HCT116 (cell line): ENCODE measurements at regions of chr17 and their contacts with region 1.

Region 1: GRCh38 chr17:66200685-66201092 is 8.8 kb upstream of the CEP112 start:
- DNase-seq: peak; percentile 89
- ATAC-seq: peak; percentile 80
- H3K4me3 ChIP-seq: no peak overlapping the region
- H3K27ac ChIP-seq: no peak overlapping the region
- H3K4me1 ChIP-seq: peaks cover 0 to 7% of the 10 kb centered on the region in 2 experiments; a peak in 1 of 4 replicates
- H3K27me3 ChIP-seq: no peaks in the 10 kb centered on the region
- CTCF ChIP-seq: peak; percentile 88 to 95 (median 88)
- POLR2A ChIP-seq: no peak
- RAD21 ChIP-seq: peak; percentile 97

Region 2: GRCh38 chr17:66255112-66255511 is 54.4 kb after region 1 on chr17:
- CTCF ChIA-PET with region 1: interaction called, 10 read pairs
- POLR2A ChIA-PET with region 1: no interaction called
- RAD21 ChIA-PET with region 1: no interaction called
- intact Hi-C with region 1: no loop called
- DNase-seq: peak; percentile 79
- ATAC-seq: peak; percentile 95
- H3K4me3 ChIP-seq: no peak overlapping the region
- H3K27ac ChIP-seq: no peak overlapping the region
- H3K4me1 ChIP-seq: peaks cover 0 to 4% of the 10 kb centered on the region in 2 experiments; a peak in 1 of 4 replicates
- H3K27me3 ChIP-seq: no peaks in the 10 kb centered on the region; the same call in 1 of the 2 replicates
- CTCF ChIP-seq: peak; percentile 75 to 97 (median 91)
- POLR2A ChIP-seq: no peak
- RAD21 ChIP-seq: peak; percentile 99

Region 3: GRCh38 chr17:66426397-66427033 is 225.8 kb after region 1 on chr17:
- CTCF ChIA-PET with region 1: no interaction called
- POLR2A ChIA-PET with region 1: no interaction called
- RAD21 ChIA-PET with region 1: no interaction called
- intact Hi-C with region 1: loop called (anchors 2 kb)
- DNase-seq: peak; percentile 31
- ATAC-seq: peak; percentile 98
- H3K4me3 ChIP-seq: no peak overlapping the region
- H3K27ac ChIP-seq: no peak overlapping the region
- H3K4me1 ChIP-seq: peaks cover 0 to 7% of the 10 kb centered on the region in 2 experiments; a peak in 1 of 4 replicates
- H3K27me3 ChIP-seq: no peaks in the 10 kb centered on the region
- CTCF ChIP-seq: peak; percentile 54 to 65 (median 63)
- POLR2A ChIP-seq: no peak
- RAD21 ChIP-seq: peak; percentile 76

Region 4: DNA sequence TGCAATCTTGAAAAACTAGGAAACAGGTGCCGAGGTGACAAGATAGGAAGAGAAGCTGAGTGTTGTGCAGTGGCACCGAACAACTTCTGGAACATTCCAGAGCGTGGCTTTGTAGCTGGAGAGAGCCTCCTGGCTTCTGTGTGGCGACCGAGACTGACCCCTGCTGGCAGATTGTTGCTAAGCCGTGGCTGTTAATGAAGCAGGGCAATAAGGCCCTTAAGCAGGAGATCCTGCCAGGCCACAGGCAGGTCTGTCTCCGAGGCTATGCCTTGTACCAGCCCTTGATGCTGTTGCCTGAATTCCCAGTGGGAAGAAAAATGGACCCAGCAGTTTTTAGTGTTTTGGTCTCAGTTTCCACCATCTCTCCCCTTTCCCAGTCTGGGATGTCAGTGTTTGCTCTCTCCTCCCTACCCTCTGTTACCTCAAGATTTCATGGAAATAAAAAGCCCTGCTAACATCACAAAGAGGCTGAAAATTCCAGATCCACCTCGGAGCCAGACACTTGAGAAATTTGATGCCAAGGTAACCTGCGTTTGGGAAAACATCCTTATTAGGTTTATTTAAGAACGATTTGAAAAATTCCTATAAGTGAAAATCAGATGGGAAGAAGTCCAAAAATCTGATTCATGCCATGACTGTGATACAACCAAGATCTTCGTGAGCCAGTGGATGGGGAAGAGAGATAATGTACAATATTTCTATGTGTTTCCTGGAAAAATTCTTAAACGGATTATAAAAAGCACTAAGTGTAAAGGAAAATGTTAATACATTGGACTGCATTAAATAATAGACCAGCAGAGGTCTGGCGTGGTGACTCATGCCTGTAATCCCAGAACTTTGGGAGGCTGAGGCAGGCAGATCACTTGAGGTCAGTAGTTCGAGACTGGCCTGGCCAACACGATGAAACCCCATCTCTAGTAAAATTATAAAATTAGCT is 366.8 kb after region 1 on chr17:
- CTCF ChIA-PET with region 1: interaction called, 25 read pairs
- POLR2A ChIA-PET with region 1: no interaction called
- RAD21 ChIA-PET with region 1: interaction called, 3 to 5 read pairs
- intact Hi-C with region 1: loop called (anchors 1 kb)
- DNase-seq: peak; percentile 71
- ATAC-seq: peak; percentile 97
- H3K4me3 ChIP-seq: no peak overlapping the region
- H3K27ac ChIP-seq: no peak overlapping the region
- H3K4me1 ChIP-seq: peaks cover 14 to 19% of the 10 kb centered on the region in 2 experiments; a peak in 3 of 4 replicates
- H3K27me3 ChIP-seq: no peaks in the 10 kb centered on the region
- CTCF ChIP-seq: peak; percentile 88 to 99 (median 98)
- POLR2A ChIP-seq: no peak
- RAD21 ChIP-seq: peak; percentile 98

Region 5: GRCh38 chr17:66625311-66625775 is 424.7 kb after region 1 on chr17:
- CTCF ChIA-PET with region 1: interaction called, 8 read pairs
- POLR2A ChIA-PET with region 1: no interaction called
- RAD21 ChIA-PET with region 1: no interaction called
- intact Hi-C with region 1: loop called (anchors 1 kb)
- DNase-seq: peak; percentile 42
- ATAC-seq: peak; percentile 89
- H3K4me3 ChIP-seq: no peak overlapping the region
- H3K27ac ChIP-seq: no peak overlapping the region
- H3K4me1 ChIP-seq: no peaks in the 10 kb centered on the region
- H3K27me3 ChIP-seq: no peaks in the 10 kb centered on the region
- CTCF ChIP-seq: peak; percentile 51 to 80 (median 77)
- POLR2A ChIP-seq: no peak
- RAD21 ChIP-seq: peak; percentile 88

Region 6: GRCh38 chr17:66906321-66907278 is 705.9 kb after region 1 on chr17:
- CTCF ChIA-PET with region 1: no interaction called
- POLR2A ChIA-PET with region 1: no interaction called
- RAD21 ChIA-PET with region 1: no interaction called
- intact Hi-C with region 1: loop called (anchors 2 kb)
- DNase-seq: peak; percentile 81
- ATAC-seq: peak; percentile 73
- H3K4me3 ChIP-seq: no peak overlapping the region
- H3K27ac ChIP-seq: no peak overlapping the region
- H3K4me1 ChIP-seq: peaks cover 0 to 3% of the 10 kb centered on the region in 2 experiments; a peak in 1 of 4 replicates
- H3K27me3 ChIP-seq: no peaks in the 10 kb centered on the region
- CTCF ChIP-seq: peak; percentile 91 to 99 (median 98)
- POLR2A ChIP-seq: peak; percentile 40
- RAD21 ChIP-seq: peak; percentile 96